GM10248 (cell line): ENCODE measurements at regions of chr3 and their contacts with region 1.

Region 1: GRCh38 chr3:69120879-69121464 is 1.4 kb downstream of the LMOD3 start:
- DNase-seq: peak; percentile 46
- CTCF ChIP-seq: peak; percentile 95

Region 2: DNA sequence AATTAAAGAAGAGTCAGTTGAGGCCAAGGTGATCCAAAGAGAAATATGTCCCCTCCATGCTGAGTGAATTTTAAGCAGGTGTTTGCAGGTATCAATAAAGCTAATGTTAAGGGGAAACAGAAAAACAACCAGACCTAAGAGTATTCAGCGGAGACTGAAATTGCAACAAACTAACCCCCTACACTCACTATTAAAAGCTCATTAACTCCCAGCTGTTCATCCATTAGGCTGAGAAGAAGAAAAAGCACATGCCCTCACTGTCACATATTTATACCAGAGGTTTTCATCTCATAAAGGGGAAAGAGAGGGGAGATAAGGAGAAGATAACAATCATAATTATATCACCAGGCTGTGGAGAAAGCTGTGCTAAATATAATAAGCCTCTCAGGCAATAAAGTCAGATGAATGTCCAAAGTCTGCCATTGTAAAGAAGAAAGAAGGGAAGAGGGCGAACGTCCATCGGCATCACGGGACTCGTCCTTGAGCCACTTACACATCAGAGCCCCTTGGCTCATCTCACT is 333.8 kb before region 1 on chr3:
- CTCF ChIA-PET with region 1: no interaction called
- POLR2A ChIA-PET with region 1: no interaction called
- DNase-seq: no peak
- CTCF ChIP-seq: no peak

Region 3: GRCh38 chr3:69097407-69098086 is 23.4 kb before region 1 on chr3:
- CTCF ChIA-PET with region 1: interaction called, 20 read pairs
- POLR2A ChIA-PET with region 1: no interaction called
- DNase-seq: no peak
- CTCF ChIP-seq: no peak

Region 4: DNA sequence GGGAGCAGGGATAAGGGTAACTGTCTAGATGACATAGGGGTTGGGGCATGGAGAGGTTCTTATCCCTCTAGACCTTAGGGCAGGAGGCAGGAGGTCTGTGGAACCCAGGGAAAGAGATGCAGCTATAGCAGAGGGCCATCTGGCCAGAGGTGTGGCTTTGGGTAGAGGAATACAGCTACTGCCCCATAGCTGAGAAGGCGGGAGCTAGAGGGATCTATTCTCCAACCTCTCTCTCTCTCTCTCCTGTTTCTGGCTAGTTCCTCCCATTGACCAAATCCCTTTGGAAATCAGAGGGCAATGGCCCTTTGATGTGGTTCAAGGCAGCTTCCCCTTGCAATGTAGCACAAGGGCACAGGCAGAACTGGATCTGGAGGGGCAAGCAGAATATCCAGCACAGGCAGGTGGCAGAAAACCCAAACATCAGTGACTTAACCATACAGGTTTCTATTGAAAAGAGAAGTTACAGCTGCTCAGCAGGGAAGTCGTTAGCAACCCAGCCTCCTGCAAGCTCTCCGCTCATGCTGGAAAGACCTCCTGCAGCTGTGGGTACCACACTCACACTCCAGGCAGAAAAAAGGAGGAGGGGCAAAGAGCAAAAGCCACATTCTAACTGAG is 23.8 kb after region 1 on chr3:
- CTCF ChIA-PET with region 1: interaction called, 28 read pairs
- POLR2A ChIA-PET with region 1: no interaction called
- DNase-seq: no peak
- CTCF ChIP-seq: no peak

Region 5: GRCh38 chr3:69250014-69250413 is 129.0 kb after region 1 on chr3:
- CTCF ChIA-PET with region 1: no interaction called
- POLR2A ChIA-PET with region 1: no interaction called
- DNase-seq: no peak
- CTCF ChIP-seq: no peak

Region 6: GRCh38 chr3:69425261-69425660 is 304.3 kb after region 1 on chr3:
- CTCF ChIA-PET with region 1: interaction called, 23 read pairs
- POLR2A ChIA-PET with region 1: no interaction called
- DNase-seq: peak; percentile 37
- CTCF ChIP-seq: peak; percentile 51